ENCODE measurements at regions of chr5 and their contacts with region 1.

Region 1: DNA sequence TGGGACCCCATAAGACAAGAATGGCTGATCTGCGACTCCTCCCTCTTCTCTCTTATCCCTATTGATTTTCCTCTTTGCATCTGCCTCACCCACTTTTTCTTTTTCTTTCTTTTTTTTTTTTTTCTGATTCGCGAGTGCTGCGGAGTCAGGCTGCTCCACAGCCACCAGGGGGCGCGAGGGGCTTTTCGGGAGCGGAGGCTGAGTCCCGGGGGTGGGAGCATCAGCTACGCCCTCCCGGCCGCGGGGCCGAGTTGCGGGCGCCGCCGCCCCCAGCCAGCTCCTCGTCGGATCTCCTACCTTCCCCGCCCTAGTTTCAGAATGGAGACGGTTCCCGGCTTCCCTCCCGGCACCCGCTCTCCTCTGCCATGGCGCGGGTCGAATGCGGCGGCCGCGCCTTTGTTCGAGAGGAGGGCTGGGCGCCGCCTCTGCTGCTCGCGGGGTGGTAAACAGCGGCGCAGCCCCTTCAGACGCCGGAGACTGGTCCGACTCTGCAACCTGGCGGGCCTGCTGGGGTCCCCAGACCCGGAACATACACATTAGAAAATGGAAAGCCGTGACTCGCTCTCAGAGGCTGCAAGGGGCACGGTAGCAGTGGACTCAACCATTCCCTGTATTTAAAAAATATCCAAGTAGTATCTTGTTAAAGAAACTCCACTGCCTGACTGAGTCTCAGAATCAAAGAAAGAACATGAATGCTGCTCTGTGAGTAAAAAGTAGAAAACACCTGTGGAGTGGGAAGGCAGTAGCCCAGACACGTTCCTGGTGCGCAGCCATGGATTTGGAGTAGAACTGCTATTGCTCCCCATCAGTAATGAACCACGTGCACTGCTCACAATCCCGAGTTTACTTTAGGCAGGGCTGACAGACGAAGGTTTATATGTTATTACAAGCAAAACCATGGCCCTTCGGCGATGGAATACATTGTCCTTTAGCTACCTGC is 55.7 kb downstream of the DPYSL3 start:
- DNase-seq: peak; percentile 91
- H3K4me3 ChIP-seq: peak overlapping the region; percentile 63 to 96
- H3K27ac ChIP-seq: peak overlapping the region; percentile 94 to 97
- H3K4me1 ChIP-seq: peaks cover 0 to 7% of the 10 kb centered on the region in 2 donors
- H3K27me3 ChIP-seq: no peaks in the 10 kb centered on the region
- CTCF ChIP-seq: peak; percentile 57 to 97 (median 90)
- POLR2A ChIP-seq: peak in 1 of 2 donors; percentile 46

Region 2: GRCh38 chr5:147417135-147417813 is 36.9 kb before region 1 on chr5:
- intact Hi-C with region 1: no loop called
- DNase-seq: peak in 1 of 2 donors; percentile 30
- H3K4me3 ChIP-seq: no peak overlapping the region
- H3K27ac ChIP-seq: peak overlapping the region in 1 of 2 donors; percentile 18
- H3K4me1 ChIP-seq: no peaks in the 10 kb centered on the region
- H3K27me3 ChIP-seq: no peaks in the 10 kb centered on the region
- CTCF ChIP-seq: no peak
- POLR2A ChIP-seq: no peak

Region 3: GRCh38 chr5:147509710-147510651 is 55.8 kb after region 1 on chr5 and contains the start of gene DPYSL3:
- intact Hi-C with region 1: loop called (anchors 10 kb)
- DNase-seq: peak; percentile 79 to 82
- H3K4me3 ChIP-seq: peak within 1 kb of the TSS; percentile 65 to 82
- H3K27ac ChIP-seq: peak within 1 kb of the TSS; percentile 91 to 93
- H3K4me1 ChIP-seq: no peaks in the 10 kb centered on the region
- H3K27me3 ChIP-seq: no peaks in the 10 kb centered on the region
- CTCF ChIP-seq: peak in 3 of 4 experiments; percentile 33 to 59 (median 34)
- POLR2A ChIP-seq: peak; percentile 12 to 82
- total RNA-seq, gene DPYSL3: 121 to 213 (median 168) TPM

Region 4: GRCh38 chr5:147558826-147559225 is 104.7 kb after region 1 on chr5:
- intact Hi-C with region 1: loop called (anchors 5 kb)
- DNase-seq: peak; percentile 65 to 75
- H3K4me3 ChIP-seq: no peak overlapping the region
- H3K27ac ChIP-seq: peak overlapping the region; percentile 45 to 53
- H3K4me1 ChIP-seq: peaks cover 0 to 2% of the 10 kb centered on the region in 2 donors
- H3K27me3 ChIP-seq: no peaks in the 10 kb centered on the region
- CTCF ChIP-seq: peak; percentile 65 to 80 (median 72)
- POLR2A ChIP-seq: no peak

Measured in uterus (tissue), 4 donors.